A549 (cell line): ENCODE measurements at regions of chr9 and their contacts with region 1.

Region 1: GRCh38 chr9:91949946-91950664 is at the start of gene ROR2:
- DNase-seq: peak; percentile 40 to 59
- ATAC-seq: peak; percentile 82 to 88
- H3K4me3 ChIP-seq: peak within 1 kb of the TSS; percentile 51
- H3K27ac ChIP-seq: peak within 1 kb of the TSS in 1 of 2 experiments; percentile 75; a peak in 3 of 6 replicates
- H3K4me1 ChIP-seq: peaks cover 7% of the 10 kb centered on the region; the same call in 1 of the 3 replicates
- CTCF ChIP-seq: peak; percentile 80
- EP300 ChIP-seq: no peak
- POLR2A ChIP-seq: no peak
- RAD21 ChIP-seq: peak in 1 of 2 experiments; percentile 50; a peak in 2 of 5 replicates
- polyA plus RNA-seq, gene ROR2: 0.12 and 0.15 TPM in 2 replicates

Region 2: DNA sequence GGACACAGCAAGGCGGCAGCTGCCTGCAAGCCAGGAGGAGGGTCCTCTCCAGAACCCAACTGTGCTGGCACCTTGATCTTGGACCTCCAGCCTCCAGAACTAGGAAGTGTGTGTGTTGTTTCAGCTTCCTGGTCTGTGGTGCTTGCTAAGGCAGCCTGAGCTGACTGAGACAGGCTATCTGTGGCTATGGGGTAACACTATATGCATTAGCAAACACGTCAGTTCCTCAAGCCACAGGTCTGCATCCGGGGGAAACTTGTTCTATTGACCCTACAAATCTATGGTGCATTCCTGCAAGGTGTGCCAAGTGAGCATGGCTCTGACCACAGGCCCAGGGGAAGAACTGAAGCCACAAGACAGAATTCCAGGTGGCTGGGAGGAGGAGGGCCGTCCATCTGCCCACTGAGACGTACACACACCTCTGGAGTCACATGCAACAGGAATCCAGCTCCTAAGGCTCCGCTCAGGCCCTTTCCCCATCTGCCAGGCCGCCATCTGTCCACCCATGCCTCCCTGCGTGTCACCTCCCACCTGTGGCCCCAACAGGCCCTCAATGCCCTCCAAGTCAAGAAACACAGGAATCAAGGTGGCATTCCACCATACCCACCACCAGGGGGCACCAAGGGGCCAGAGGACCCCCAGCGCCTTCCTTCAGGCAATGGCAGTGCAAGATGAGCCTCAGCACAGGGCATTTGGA is 174.9 kb before region 1 on chr9:
- CTCF ChIA-PET with region 1: interaction called, 35 read pairs
- POLR2A ChIA-PET with region 1: no interaction called
- DNase-seq: peak; percentile 66 to 75
- ATAC-seq: peak; percentile 83 to 95
- H3K4me3 ChIP-seq: no peak overlapping the region
- H3K27ac ChIP-seq: no peak overlapping the region
- H3K4me1 ChIP-seq: no peaks in the 10 kb centered on the region
- CTCF ChIP-seq: peak; percentile 77
- EP300 ChIP-seq: no peak
- POLR2A ChIP-seq: no peak
- RAD21 ChIP-seq: peak; percentile 78 to 89

Region 3: GRCh38 chr9:91873637-91874051 is 76.5 kb before region 1 on chr9:
- CTCF ChIA-PET with region 1: no interaction called
- POLR2A ChIA-PET with region 1: no interaction called
- DNase-seq: no peak
- ATAC-seq: no peak
- H3K4me3 ChIP-seq: no peak overlapping the region
- H3K27ac ChIP-seq: no peak overlapping the region
- H3K4me1 ChIP-seq: no peaks in the 10 kb centered on the region
- CTCF ChIP-seq: no peak
- EP300 ChIP-seq: no peak
- POLR2A ChIP-seq: no peak
- RAD21 ChIP-seq: no peak

Region 4: GRCh38 chr9:91935066-91935749 is 14.9 kb before region 1 on chr9:
- CTCF ChIA-PET with region 1: interaction called, 21 read pairs
- POLR2A ChIA-PET with region 1: no interaction called
- DNase-seq: no peak
- ATAC-seq: no peak
- H3K4me3 ChIP-seq: no peak overlapping the region
- H3K27ac ChIP-seq: no peak overlapping the region
- H3K4me1 ChIP-seq: no peaks in the 10 kb centered on the region
- CTCF ChIP-seq: no peak
- EP300 ChIP-seq: no peak
- POLR2A ChIP-seq: no peak
- RAD21 ChIP-seq: no peak

Region 5: GRCh38 chr9:91966503-91966902 is 16.4 kb after region 1 on chr9:
- CTCF ChIA-PET with region 1: interaction called, 55 read pairs
- POLR2A ChIA-PET with region 1: no interaction called
- DNase-seq: no peak
- ATAC-seq: no peak; a peak in 1 of 6 replicates
- H3K4me3 ChIP-seq: no peak overlapping the region
- H3K27ac ChIP-seq: no peak overlapping the region
- H3K4me1 ChIP-seq: no peaks in the 10 kb centered on the region
- CTCF ChIP-seq: no peak
- EP300 ChIP-seq: no peak
- POLR2A ChIP-seq: no peak
- RAD21 ChIP-seq: no peak

Region 6: GRCh38 chr9:91978739-91979414 is 28.8 kb after region 1 on chr9:
- CTCF ChIA-PET with region 1: interaction called, 37 read pairs
- POLR2A ChIA-PET with region 1: no interaction called
- DNase-seq: peak; percentile 46 to 57
- ATAC-seq: peak; percentile 80 to 89
- H3K4me3 ChIP-seq: no peak overlapping the region
- H3K27ac ChIP-seq: 0 out of 6 replicates have a peak overlapping the region, but pooled peaks of 1 of the 2 experiments have one; percentile 21
- H3K4me1 ChIP-seq: peaks cover 10% of the 10 kb centered on the region
- CTCF ChIP-seq: peak; percentile 36; the same call in 1 of the 3 replicates
- EP300 ChIP-seq: no peak
- POLR2A ChIP-seq: no peak
- RAD21 ChIP-seq: peak; percentile 31 to 56; a peak in 2 of 5 replicates

Region 7: GRCh38 chr9:91986248-91986647 is 36.1 kb after region 1 on chr9:
- CTCF ChIA-PET with region 1: interaction called, 14 read pairs
- POLR2A ChIA-PET with region 1: no interaction called
- DNase-seq: no peak
- ATAC-seq: no peak
- H3K4me3 ChIP-seq: no peak overlapping the region
- H3K27ac ChIP-seq: no peak overlapping the region
- H3K4me1 ChIP-seq: no peaks in the 10 kb centered on the region
- CTCF ChIP-seq: no peak
- EP300 ChIP-seq: no peak
- POLR2A ChIP-seq: no peak
- RAD21 ChIP-seq: no peak

Region 8: GRCh38 chr9:92001244-92001643 is 51.1 kb after region 1 on chr9:
- CTCF ChIA-PET with region 1: interaction called, 17 read pairs
- POLR2A ChIA-PET with region 1: interaction called, 3 read pairs
- DNase-seq: no peak
- ATAC-seq: peak; percentile 43 to 54; a peak in 3 of 6 replicates
- H3K4me3 ChIP-seq: no peak overlapping the region
- H3K27ac ChIP-seq: no peak overlapping the region
- H3K4me1 ChIP-seq: no peaks in the 10 kb centered on the region
- CTCF ChIP-seq: no peak
- EP300 ChIP-seq: no peak
- POLR2A ChIP-seq: no peak
- RAD21 ChIP-seq: no peak

Region 9: DNA sequence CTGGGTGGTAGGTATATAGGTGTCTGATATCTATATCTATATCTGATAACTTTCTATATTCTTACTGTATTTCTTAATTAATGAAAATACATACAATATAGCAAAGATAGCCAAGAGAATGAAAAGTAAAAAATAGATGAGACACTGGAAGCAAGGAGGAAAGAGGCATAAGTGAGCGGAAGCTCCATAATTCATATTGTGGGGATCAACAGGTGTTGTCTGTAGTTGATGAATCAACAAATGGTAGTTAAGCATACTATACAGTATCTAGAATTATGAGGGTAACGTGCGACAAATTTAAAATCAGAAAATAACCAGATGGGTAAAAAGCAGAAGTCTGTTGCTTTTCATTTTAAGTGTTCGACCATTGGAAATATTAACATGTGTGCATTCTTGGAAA is 158.0 kb after region 1 on chr9:
- CTCF ChIA-PET with region 1: no interaction called
- POLR2A ChIA-PET with region 1: no interaction called
- DNase-seq: no peak
- ATAC-seq: no peak
- H3K4me3 ChIP-seq: no peak overlapping the region
- H3K27ac ChIP-seq: no peak overlapping the region
- H3K4me1 ChIP-seq: 0 out of 3 replicates have a peak, but pooled peaks cover under 1% of the 10 kb centered on the region
- CTCF ChIP-seq: no peak
- EP300 ChIP-seq: no peak
- POLR2A ChIP-seq: no peak
- RAD21 ChIP-seq: no peak